Dorsolateral prefrontal cortex (tissue), 120 donors: ENCODE measurements at regions of chr7 and their contacts with region 1.

Region 1: GRCh38 chr7:95545078-95545498 is 51.2 kb downstream of the PDK4 start:
- DNase-seq: peak in 3 of 10 donors; percentile 40 to 61 (median 60)
- H3K4me3 ChIP-seq: peak overlapping the region in 58 of 59 donors; percentile 3 to 67 (median 46)
- H3K27ac ChIP-seq: peak overlapping the region; percentile 70 to 100 (median 93)
- H3K27me3 ChIP-seq: no peaks in the 10 kb centered on the region
- CTCF ChIP-seq: peak; percentile 38 to 92 (median 76)

Region 2: DNA sequence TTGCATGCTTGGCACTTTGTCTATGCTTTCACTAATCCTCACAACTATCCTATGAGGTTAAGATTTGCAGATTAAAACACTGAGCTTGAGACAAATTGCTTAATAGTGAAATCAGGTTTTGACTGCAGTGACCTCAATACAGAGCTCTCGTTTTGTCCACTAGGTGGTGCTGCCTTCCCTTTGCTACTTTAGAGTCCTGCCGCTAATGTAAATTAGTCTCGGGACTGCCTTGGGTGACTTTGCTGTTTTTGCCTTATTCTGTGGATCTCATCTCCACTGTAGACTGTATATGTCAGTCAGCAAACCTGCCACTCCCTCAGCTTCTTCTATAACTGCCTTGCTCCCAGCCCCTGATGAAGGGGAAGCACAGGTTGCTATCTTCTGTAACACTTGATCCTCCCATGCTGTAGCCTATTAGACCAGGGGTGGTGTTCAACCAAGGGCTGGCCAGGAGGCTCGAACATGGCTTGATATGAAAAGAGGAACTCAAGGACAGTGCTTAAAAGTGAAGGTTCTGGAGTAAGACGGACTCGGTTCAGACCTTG is 33.3 kb before region 1 on chr7:
- intact Hi-C with region 1: loop called in 1 of 2 experiments (anchors 5 kb)
- DNase-seq: peak; percentile 30 to 91 (median 64)
- H3K4me3 ChIP-seq: peak overlapping the region in 6 of 59 donors; percentile 1 to 13 (median 10)
- H3K27ac ChIP-seq: peak overlapping the region in 57 of 59 donors; percentile 25 to 94 (median 81)
- H3K27me3 ChIP-seq: no peaks in the 10 kb centered on the region
- CTCF ChIP-seq: peak; percentile 74 to 97 (median 92)

Region 3: DNA sequence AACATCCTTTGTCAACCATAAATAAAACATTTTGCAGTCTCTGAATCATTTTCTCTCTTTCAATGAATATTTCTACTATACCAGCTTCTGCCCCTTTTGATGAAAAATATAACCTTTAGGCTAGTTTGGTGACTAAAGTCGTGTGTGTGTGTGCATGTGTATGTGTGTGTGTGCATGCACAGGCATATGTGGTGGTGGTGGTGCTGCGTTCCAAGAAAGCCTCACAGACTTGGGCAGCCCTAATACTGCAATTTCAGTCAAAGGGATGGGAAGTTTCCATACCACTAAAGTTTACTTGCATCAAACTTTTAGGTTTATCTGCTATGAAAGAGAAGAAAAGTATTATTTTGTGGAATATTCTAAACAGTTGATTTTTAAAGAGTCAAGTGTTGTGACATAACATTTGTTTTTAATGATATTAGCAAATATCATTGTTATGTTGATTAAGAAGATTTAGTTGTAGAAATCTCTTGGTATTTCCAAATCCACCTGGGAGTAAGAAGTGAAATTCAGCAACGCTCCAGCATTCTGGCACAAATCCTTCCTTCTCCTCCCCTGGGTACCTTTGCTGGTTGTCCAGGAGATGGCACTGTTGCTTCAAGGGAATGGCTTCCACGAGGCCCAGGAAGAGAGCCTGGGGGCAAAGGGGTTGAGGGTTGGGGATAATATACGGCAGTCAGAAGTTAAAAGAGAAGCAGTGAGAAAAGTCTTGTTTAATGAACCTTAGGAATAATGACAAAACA is 17.9 kb before region 1 on chr7:
- intact Hi-C with region 1: loop called (anchors 2 kb)
- DNase-seq: peak in 6 of 10 donors; percentile 23 to 73 (median 54)
- H3K4me3 ChIP-seq: peak overlapping the region in 11 of 59 donors; percentile 1 to 31 (median 12)
- H3K27ac ChIP-seq: peak overlapping the region in 58 of 59 donors; percentile 46 to 99 (median 93)
- H3K27me3 ChIP-seq: no peaks in the 10 kb centered on the region
- CTCF ChIP-seq: peak; percentile 52 to 98 (median 92)

Region 4: DNA sequence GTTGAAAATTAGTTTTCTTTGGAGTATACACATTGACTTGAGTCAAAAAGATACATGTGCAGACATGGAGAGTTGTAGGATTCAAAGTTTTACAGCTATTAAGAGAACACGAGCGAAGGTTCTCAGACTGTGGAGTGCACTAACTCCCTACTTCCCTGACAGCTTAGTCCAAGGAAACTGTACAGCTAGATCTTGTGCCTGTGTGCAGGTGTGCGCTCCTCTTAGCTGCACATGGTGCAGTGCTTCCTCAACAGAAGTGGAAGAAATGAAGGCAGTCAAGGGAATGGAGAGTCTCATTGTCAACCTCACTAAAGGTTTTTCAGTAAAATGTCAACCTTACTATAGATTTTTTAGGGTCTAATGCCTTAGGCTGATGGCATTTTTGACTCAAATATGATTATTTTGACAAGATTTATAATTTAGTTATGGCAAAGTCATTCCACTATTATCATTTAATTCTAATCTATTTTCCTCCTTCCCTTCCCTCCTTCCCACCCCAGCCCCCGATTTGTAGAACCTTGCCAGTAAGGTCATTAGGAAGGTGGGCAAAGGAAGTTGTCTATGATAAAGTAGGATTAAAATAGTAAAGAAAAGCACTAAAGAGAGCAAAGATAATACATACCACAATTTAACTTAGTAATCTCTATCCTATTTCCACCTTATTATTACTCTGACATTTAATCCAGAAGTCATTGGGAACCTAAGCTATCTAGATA is 37.6 kb after region 1 on chr7:
- intact Hi-C with region 1: no loop called
- DNase-seq: no peak
- H3K4me3 ChIP-seq: no peak overlapping the region
- H3K27ac ChIP-seq: peak overlapping the region in 5 of 59 donors; percentile 2 to 22 (median 10)
- H3K27me3 ChIP-seq: no peaks in the 10 kb centered on the region
- CTCF ChIP-seq: no peak

Region 5: GRCh38 chr7:95596198-95597063 is 51.3 kb after region 1 on chr7 and contains the start of gene PDK4:
- intact Hi-C with region 1: loop called (anchors 1 to 2 kb)
- DNase-seq: peak; percentile 43 to 97 (median 94)
- H3K4me3 ChIP-seq: peak within 1 kb of the TSS; percentile 52 to 95 (median 82)
- H3K27ac ChIP-seq: peak within 1 kb of the TSS; percentile 63 to 99 (median 93)
- H3K27me3 ChIP-seq: peaks cover 0 to 8% (median 0%) of the 10 kb centered on the region in 45 donors
- CTCF ChIP-seq: peak in 6 of 56 donors; percentile 9 to 36 (median 16)
- total RNA-seq, gene PDK4: 11.8 to 278 (median 65.1) TPM